CD8-positive, alpha-beta T cell (primary cell): ENCODE measurements at regions of chr7 and their contacts with region 1.

Region 1: GRCh38 chr7:132437730-132438129 is 138.5 kb downstream of the PLXNA4 start:
- DNase-seq: peak in 5 of 9 experiments; percentile 30 to 70 (median 45)
- ATAC-seq: peak; percentile 75
- H3K4me3 ChIP-seq: peak overlapping the region in 1 of 2 experiments; percentile 13
- H3K4me3 Mint-ChIP-seq: peak overlapping the region; percentile 15
- H3K27ac ChIP-seq: peak overlapping the region in 1 of 2 experiments; percentile 15
- H3K27ac Mint-ChIP-seq: peak overlapping the region; percentile 23
- H3K4me1 ChIP-seq: peaks cover 76% of the 10 kb centered on the region
- H3K4me1 Mint-ChIP-seq: peaks cover 74% of the 10 kb centered on the region
- H3K27me3 ChIP-seq: no peaks in the 10 kb centered on the region
- H3K27me3 Mint-ChIP-seq: no peaks in the 10 kb centered on the region
- CTCF ChIP-seq: no peak

Region 2: GRCh38 chr7:132206594-132206993 is 231.1 kb before region 1 on chr7:
- CTCF ChIA-PET with region 1: no interaction called
- POLR2A ChIA-PET with region 1: no interaction called
- intact Hi-C with region 1: no loop called
- DNase-seq: no peak
- ATAC-seq: no peak
- H3K4me3 ChIP-seq: no peak overlapping the region
- H3K4me3 Mint-ChIP-seq: no peak overlapping the region
- H3K27ac ChIP-seq: no peak overlapping the region
- H3K27ac Mint-ChIP-seq: no peak overlapping the region
- H3K4me1 ChIP-seq: no peaks in the 10 kb centered on the region
- H3K4me1 Mint-ChIP-seq: no peaks in the 10 kb centered on the region
- H3K27me3 ChIP-seq: no peaks in the 10 kb centered on the region
- H3K27me3 Mint-ChIP-seq: no peaks in the 10 kb centered on the region
- CTCF ChIP-seq: no peak

Region 3: DNA sequence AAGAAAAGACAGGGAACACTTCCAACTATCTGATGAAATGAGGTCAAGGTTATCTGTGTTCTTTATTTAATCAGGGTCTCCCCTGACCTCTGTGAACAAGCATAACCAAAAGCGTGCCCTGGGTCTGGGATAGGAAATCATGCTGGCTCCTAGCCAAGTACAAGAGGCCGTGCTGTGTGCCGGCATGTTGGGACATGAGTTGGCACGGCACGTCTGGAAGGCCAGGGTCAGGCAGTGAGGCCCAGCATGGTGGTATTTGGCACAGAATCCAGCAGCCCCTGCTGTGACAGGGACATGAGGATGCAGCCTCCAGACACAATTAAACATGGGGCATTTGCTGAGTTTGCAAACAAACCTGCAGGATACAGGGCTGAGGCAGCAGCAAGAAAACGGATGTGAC is 181.8 kb before region 1 on chr7:
- CTCF ChIA-PET with region 1: no interaction called
- POLR2A ChIA-PET with region 1: no interaction called
- intact Hi-C with region 1: no loop called
- DNase-seq: no peak
- ATAC-seq: no peak
- H3K4me3 ChIP-seq: no peak overlapping the region
- H3K4me3 Mint-ChIP-seq: no peak overlapping the region
- H3K27ac ChIP-seq: no peak overlapping the region
- H3K27ac Mint-ChIP-seq: no peak overlapping the region
- H3K4me1 ChIP-seq: no peaks in the 10 kb centered on the region
- H3K4me1 Mint-ChIP-seq: no peaks in the 10 kb centered on the region
- H3K27me3 ChIP-seq: no peaks in the 10 kb centered on the region
- H3K27me3 Mint-ChIP-seq: peaks cover 2% of the 10 kb centered on the region
- CTCF ChIP-seq: no peak

Region 4: DNA sequence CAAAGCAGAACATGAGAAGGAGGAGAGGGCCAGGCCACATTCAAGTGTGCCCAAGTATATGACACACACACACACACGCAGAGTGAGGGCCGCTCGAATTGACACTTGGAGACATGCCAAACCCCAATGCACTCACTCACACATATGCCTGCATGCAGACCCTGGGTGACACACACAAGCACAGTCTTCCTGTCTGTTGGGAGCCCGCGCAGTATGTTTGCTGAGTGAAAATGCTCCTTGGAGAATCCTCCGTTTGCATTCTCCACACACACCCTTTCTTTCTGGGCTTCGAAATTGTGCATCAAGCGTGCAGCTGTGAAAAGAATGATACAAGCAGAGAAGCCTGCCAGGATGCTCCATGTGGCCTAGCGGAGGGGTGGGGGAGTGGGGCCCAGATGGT is 17.6 kb after region 1 on chr7:
- CTCF ChIA-PET with region 1: interaction called, 4 read pairs
- POLR2A ChIA-PET with region 1: interaction called, 3 read pairs
- intact Hi-C with region 1: loop called (anchors 2 kb)
- DNase-seq: peak in 8 of 9 experiments; percentile 21 to 76 (median 58)
- ATAC-seq: peak; percentile 74
- H3K4me3 ChIP-seq: no peak overlapping the region
- H3K4me3 Mint-ChIP-seq: peak overlapping the region; percentile 46
- H3K27ac ChIP-seq: no peak overlapping the region
- H3K27ac Mint-ChIP-seq: peak overlapping the region; percentile 39
- H3K4me1 ChIP-seq: peaks cover 56% of the 10 kb centered on the region
- H3K4me1 Mint-ChIP-seq: peaks cover 55% of the 10 kb centered on the region
- H3K27me3 ChIP-seq: no peaks in the 10 kb centered on the region
- H3K27me3 Mint-ChIP-seq: no peaks in the 10 kb centered on the region
- CTCF ChIP-seq: no peak

Region 5: GRCh38 chr7:132472463-132473120 is 34.9 kb after region 1 on chr7:
- CTCF ChIA-PET with region 1: no interaction called
- POLR2A ChIA-PET with region 1: no interaction called
- intact Hi-C with region 1: loop called in 1 of 2 experiments (anchors 5 kb)
- DNase-seq: no peak
- ATAC-seq: no peak
- H3K4me3 ChIP-seq: no peak overlapping the region
- H3K4me3 Mint-ChIP-seq: no peak overlapping the region
- H3K27ac ChIP-seq: no peak overlapping the region
- H3K27ac Mint-ChIP-seq: no peak overlapping the region
- H3K4me1 ChIP-seq: peaks cover 21% of the 10 kb centered on the region
- H3K4me1 Mint-ChIP-seq: peaks cover 25% of the 10 kb centered on the region
- H3K27me3 ChIP-seq: peaks cover 0 to 2% of the 10 kb centered on the region in 2 experiments
- H3K27me3 Mint-ChIP-seq: no peaks in the 10 kb centered on the region
- CTCF ChIP-seq: no peak